ENCODE measurements at regions of chr12 and their contacts with region 1.

Region 1: GRCh38 chr12:71315328-71315985 is 124.1 kb upstream of the LGR5 start:
- DNase-seq: no peak
- ATAC-seq: no peak

Region 2: DNA sequence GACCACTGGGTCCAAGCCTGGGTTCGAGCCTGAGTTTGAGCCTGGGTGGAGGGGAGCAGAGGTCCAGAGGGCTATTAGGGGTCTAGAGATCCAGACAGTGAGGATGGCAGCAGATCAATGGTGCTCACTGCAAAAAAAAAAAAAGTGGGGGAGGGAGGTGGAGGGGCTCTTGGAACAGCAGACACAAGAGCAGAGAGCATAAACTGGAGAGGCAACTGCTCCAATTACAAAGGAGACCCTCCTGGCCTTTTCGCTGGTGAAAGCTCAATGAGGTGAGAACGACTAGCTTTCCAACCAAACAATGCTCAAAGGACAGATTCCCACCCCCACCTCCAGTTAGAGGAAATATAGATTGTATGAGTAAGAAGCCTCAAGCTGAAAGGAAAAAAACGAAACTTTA is 33.4 kb before region 1 on chr12:
- intact Hi-C with region 1: loop called (anchors 1 kb)
- DNase-seq: no peak
- ATAC-seq: no peak

Measured in sciatic nerve (tissue), 2 donors.